GM12878 (cell line): ENCODE measurements at regions of chr5 and their contacts with region 1.

Region 1: GRCh38 chr5:108919591-108920326 is 172.1 kb downstream of the FER start:
- DNase-seq: no peak
- ATAC-seq: peak; percentile 70
- H3K4me3 ChIP-seq: no peak overlapping the region
- H3K27ac ChIP-seq: no peak overlapping the region
- H3K4me1 ChIP-seq: no peaks in the 10 kb centered on the region
- H3K27me3 ChIP-seq: no peaks in the 10 kb centered on the region
- CTCF ChIP-seq: peak in 1 of 3 experiments; percentile 14; a peak in 1 of 6 replicates
- EP300 ChIP-seq: no peak
- POLR2A ChIP-seq: no peak
- RAD21 ChIP-seq: peak; percentile 33

Region 2: DNA sequence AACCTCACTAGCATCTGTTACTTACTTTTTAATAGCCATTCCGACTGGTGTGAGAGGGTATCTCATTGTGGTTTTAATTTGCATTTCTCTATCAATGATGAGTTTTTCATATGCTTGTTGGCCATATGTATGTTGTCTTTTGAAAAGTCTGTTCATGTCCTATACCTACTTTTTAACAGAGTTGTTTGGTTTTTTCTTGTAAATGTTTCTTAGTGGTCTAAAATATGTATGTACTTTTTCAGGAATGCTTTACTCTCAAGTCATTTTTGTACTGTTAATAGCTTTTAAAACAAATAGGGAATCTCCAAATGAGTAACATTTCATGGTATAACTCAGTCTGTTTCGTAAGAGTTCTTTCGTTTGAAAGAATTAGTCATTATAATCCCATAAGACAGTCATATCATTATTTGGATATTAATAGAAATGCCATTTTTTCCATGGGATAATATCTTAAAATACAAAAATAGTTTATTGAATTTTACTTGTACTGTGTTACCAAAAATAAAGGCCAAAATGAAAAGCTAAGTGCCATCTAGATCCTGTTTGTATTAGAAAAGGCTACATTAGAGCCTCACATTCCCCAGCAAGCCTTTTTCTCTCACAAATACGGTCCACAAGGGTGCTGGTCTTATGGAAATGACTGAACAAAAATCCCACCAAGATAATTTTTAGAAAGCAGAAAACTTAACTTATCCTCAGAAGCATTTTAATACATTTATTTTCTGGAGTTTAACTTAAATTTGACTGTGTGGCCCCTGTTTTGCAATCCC is 242.3 kb after region 1 on chr5:
- CTCF ChIA-PET with region 1: interaction called, 3 read pairs
- POLR2A ChIA-PET with region 1: no interaction called
- RAD21 ChIA-PET with region 1: interaction called, 3 read pairs
- SMC1A ChIA-PET with region 1: no interaction called
- in situ Hi-C with region 1: no loop called
- intact Hi-C with region 1: loop called (anchors 10 kb)
- DNase-seq: peak; percentile 34
- ATAC-seq: peak; percentile 85
- H3K4me3 ChIP-seq: no peak overlapping the region
- H3K27ac ChIP-seq: peak overlapping the region; percentile 48; the same call in 1 of the 2 replicates
- H3K4me1 ChIP-seq: peaks cover 7% of the 10 kb centered on the region
- H3K27me3 ChIP-seq: no peaks in the 10 kb centered on the region
- CTCF ChIP-seq: no peak
- EP300 ChIP-seq: peak; percentile 93 to 99
- POLR2A ChIP-seq: no peak
- RAD21 ChIP-seq: 0 out of 2 replicates have a peak, but pooled peaks have one; percentile 10

Region 3: GRCh38 chr5:109439590-109439989 is 519.8 kb after region 1 on chr5:
- CTCF ChIA-PET with region 1: interaction called, 6 read pairs
- POLR2A ChIA-PET with region 1: no interaction called
- RAD21 ChIA-PET with region 1: interaction called, 7 read pairs
- SMC1A ChIA-PET with region 1: interaction called, 7 read pairs
- in situ Hi-C with region 1: no loop called
- intact Hi-C with region 1: loop called (anchors 10 kb)
- DNase-seq: no peak
- ATAC-seq: peak; percentile 68
- H3K4me3 ChIP-seq: no peak overlapping the region
- H3K27ac ChIP-seq: no peak overlapping the region
- H3K4me1 ChIP-seq: no peaks in the 10 kb centered on the region
- H3K27me3 ChIP-seq: no peaks in the 10 kb centered on the region
- CTCF ChIP-seq: no peak
- EP300 ChIP-seq: no peak
- POLR2A ChIP-seq: no peak
- RAD21 ChIP-seq: no peak

Region 4: GRCh38 chr5:109468737-109469420 is 549.1 kb after region 1 on chr5:
- CTCF ChIA-PET with region 1: interaction called, 5 read pairs
- POLR2A ChIA-PET with region 1: no interaction called
- RAD21 ChIA-PET with region 1: interaction called, 3 read pairs
- SMC1A ChIA-PET with region 1: interaction called, 10 read pairs
- in situ Hi-C with region 1: no loop called
- intact Hi-C with region 1: loop called (anchors 10 kb)
- DNase-seq: peak; percentile 63
- ATAC-seq: peak; percentile 95
- H3K4me3 ChIP-seq: no peak overlapping the region
- H3K27ac ChIP-seq: no peak overlapping the region
- H3K4me1 ChIP-seq: peaks cover 7% of the 10 kb centered on the region
- H3K27me3 ChIP-seq: no peaks in the 10 kb centered on the region
- CTCF ChIP-seq: peak; percentile 77 to 90 (median 77)
- EP300 ChIP-seq: no peak
- POLR2A ChIP-seq: no peak
- RAD21 ChIP-seq: peak; percentile 73

Region 5: GRCh38 chr5:109640976-109641375 is 721.2 kb after region 1 on chr5:
- CTCF ChIA-PET with region 1: no interaction called
- POLR2A ChIA-PET with region 1: no interaction called
- RAD21 ChIA-PET with region 1: no interaction called
- SMC1A ChIA-PET with region 1: no interaction called
- in situ Hi-C with region 1: no loop called
- intact Hi-C with region 1: no loop called
- DNase-seq: no peak
- ATAC-seq: no peak
- H3K4me3 ChIP-seq: no peak overlapping the region
- H3K27ac ChIP-seq: no peak overlapping the region
- H3K4me1 ChIP-seq: no peaks in the 10 kb centered on the region
- H3K27me3 ChIP-seq: no peaks in the 10 kb centered on the region
- CTCF ChIP-seq: no peak
- EP300 ChIP-seq: no peak
- POLR2A ChIP-seq: no peak
- RAD21 ChIP-seq: no peak